Activated B cell treated with CpG ODN at 0.5 μM for 24 hours (primary cell): ENCODE measurements at regions of chr1 and their contacts with region 1.

Region 1: DNA sequence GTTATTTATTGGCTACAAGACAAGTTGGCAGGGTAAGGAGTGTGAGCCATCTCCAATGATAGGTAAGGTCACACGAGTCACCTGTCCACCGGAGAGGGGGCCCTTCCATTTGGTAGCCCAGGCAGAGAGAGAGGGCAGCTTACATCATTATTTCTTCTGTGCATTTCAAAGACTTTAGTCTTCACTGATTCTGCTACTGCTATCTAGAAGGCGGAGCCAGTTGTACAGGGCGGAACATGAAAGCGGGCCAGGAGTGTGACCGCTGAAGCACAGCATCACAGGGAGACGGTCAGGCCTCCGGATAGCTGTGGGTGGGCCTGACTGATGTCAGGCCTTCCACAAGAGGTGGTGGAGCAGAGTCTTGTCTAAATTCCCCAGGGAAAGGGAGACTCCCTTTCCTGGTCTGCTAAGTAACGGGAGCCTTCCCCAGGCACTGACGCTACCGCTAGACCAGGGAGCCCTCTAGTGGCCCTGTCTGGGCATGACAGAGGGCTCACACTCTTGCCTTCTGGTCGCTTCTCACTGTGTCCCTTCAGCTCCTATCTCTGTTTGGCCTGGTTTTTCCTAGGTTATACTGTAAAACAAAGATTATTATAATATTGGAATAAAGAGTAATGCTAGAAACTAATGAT is 36.7 kb downstream of the ZNF695 start:
- DNase-seq: peak; percentile 29
- ATAC-seq: no peak
- H3K4me3 Mint-ChIP-seq: peak overlapping the region; percentile 11
- H3K27ac Mint-ChIP-seq: no peak overlapping the region
- H3K4me1 Mint-ChIP-seq: no peaks in the 10 kb centered on the region
- H3K27me3 Mint-ChIP-seq: no peaks in the 10 kb centered on the region
- CTCF ChIP-seq: no peak

Region 2: DNA sequence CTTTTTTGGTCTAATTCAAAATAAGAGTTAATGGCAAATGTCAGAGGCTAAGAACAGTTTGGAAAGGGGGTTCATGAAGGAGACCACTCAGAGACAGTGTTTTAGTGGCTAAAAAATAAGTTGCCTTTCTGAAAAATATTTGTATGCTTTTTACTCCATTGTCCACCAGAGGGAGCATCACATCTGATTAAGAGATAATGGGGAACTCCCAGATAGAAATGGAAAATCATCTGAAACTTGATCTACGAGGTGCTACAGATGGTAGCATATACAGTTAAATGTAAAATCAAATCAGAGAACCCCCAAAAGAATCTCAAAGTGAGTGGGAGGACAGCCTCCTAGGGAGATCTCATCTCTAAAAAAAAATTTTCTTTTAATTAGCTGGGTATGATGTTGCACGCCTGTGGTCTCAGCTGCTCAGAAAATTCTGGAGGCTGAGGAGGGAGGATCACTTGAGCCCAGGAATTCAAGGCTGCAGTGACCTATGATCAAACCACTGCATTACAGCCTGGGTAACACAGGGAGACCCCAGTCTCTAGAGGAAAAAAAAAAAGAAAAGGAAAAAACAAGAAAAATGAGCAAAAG is 473.8 kb before region 1 on chr1:
- CTCF ChIA-PET with region 1: no interaction called
- POLR2A ChIA-PET with region 1: no interaction called
- intact Hi-C with region 1: loop called (anchors 1 kb)
- DNase-seq: no peak
- ATAC-seq: peak; percentile 86
- H3K4me3 Mint-ChIP-seq: no peak overlapping the region
- H3K27ac Mint-ChIP-seq: no peak overlapping the region
- H3K4me1 Mint-ChIP-seq: peaks cover 4% of the 10 kb centered on the region
- H3K27me3 Mint-ChIP-seq: no peaks in the 10 kb centered on the region
- CTCF ChIP-seq: peak; percentile 55

Region 3: DNA sequence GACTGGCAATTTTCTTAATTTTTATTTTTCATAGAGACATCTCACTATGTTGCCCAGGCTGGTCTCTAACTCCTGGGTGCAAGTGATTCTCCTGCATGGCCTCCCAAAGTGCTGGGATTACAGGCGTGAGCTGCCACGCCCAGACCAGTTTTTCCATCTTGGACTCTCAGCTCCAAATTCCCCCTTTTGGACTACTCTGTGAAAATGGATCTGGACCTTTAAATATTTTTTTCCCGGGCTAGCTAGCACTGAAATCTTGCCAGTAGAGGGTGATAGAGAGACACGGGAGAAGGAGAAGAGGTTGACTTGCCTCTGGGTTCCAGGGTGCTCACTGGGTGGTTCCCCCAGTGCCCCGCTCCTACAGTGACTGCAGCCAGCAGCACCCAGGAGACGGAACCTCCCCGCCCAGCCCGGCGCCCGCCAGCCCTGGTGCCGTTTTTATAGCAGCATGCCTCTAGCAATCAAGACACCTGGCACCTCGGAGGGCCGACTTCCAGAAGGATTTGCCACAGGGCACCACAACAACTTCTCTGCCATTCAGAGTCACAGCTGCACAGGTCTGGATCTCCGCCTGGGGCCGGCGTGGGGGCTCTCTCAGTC is 281.7 kb before region 1 on chr1:
- CTCF ChIA-PET with region 1: no interaction called
- POLR2A ChIA-PET with region 1: no interaction called
- intact Hi-C with region 1: loop called (anchors 1 kb)
- DNase-seq: no peak
- ATAC-seq: peak; percentile 90
- H3K4me3 Mint-ChIP-seq: peak overlapping the region; percentile 38
- H3K27ac Mint-ChIP-seq: no peak overlapping the region
- H3K4me1 Mint-ChIP-seq: peaks cover 4% of the 10 kb centered on the region
- H3K27me3 Mint-ChIP-seq: no peaks in the 10 kb centered on the region
- CTCF ChIP-seq: peak; percentile 19

Region 4: GRCh38 chr1:246875041-246876026 is 95.9 kb before region 1 on chr1:
- CTCF ChIA-PET with region 1: no interaction called
- POLR2A ChIA-PET with region 1: no interaction called
- intact Hi-C with region 1: no loop called
- DNase-seq: no peak
- ATAC-seq: no peak
- H3K4me3 Mint-ChIP-seq: no peak overlapping the region
- H3K27ac Mint-ChIP-seq: no peak overlapping the region
- H3K4me1 Mint-ChIP-seq: no peaks in the 10 kb centered on the region
- H3K27me3 Mint-ChIP-seq: no peaks in the 10 kb centered on the region
- CTCF ChIP-seq: no peak

Region 5: GRCh38 chr1:246907472-246907871 is 63.7 kb before region 1 on chr1:
- CTCF ChIA-PET with region 1: interaction called, 17 read pairs
- POLR2A ChIA-PET with region 1: no interaction called
- intact Hi-C with region 1: loop called (anchors 1 kb)
- DNase-seq: no peak
- ATAC-seq: no peak
- H3K4me3 Mint-ChIP-seq: no peak overlapping the region
- H3K27ac Mint-ChIP-seq: no peak overlapping the region
- H3K4me1 Mint-ChIP-seq: no peaks in the 10 kb centered on the region
- H3K27me3 Mint-ChIP-seq: no peaks in the 10 kb centered on the region
- CTCF ChIP-seq: no peak

Region 6: DNA sequence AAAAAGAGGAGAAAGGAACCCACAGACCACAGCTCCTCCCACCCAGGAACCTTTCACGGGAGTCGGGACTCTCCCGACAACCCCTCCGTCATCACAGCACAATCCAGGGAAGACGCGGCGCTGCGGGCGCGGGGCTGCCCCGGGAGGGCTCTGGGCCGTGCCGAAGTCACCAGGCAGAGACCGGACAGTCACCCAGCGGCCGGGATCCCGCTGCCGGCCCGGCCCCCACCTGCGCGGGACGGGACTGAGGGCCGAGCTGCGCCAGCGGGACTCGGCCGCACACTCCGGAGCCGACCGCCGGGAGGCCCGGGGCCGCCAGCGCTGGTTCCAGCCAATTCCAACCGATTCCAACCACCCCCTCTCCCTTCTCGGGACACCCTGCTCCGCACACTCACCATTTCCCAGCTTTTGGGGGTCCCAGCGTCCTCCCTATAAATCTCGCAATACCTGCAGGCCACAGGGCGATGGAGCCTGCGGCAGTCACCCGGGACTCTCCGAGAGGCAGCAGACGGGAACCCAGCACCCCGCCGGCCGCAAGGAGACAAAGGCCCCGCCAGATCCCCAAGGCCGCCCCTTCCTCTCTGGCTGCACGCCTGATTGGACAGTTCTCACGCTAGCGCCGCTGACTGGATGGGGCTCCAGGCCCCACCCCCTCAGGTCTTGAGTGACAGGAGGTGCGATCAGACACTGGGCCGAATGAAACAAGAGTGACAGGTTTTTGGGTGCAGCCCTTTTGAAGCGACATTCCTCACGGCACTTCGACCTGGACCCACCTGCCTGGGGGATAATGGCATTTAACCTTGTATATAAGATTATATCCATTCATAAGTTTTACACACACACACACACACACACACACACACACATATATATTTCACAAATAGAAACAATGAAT is 36.6 kb after region 1 on chr1 and contains the start of gene ZNF695:
- CTCF ChIA-PET with region 1: no interaction called
- POLR2A ChIA-PET with region 1: no interaction called
- intact Hi-C with region 1: no loop called
- DNase-seq: peak; percentile 56
- ATAC-seq: peak; percentile 100
- H3K4me3 Mint-ChIP-seq: peak within 1 kb of the TSS; percentile 92
- H3K27ac Mint-ChIP-seq: peak within 1 kb of the TSS; percentile 18
- H3K4me1 Mint-ChIP-seq: peaks cover 10% of the 10 kb centered on the region
- H3K27me3 Mint-ChIP-seq: peaks cover 14% of the 10 kb centered on the region
- CTCF ChIP-seq: no peak
- total RNA-seq, gene ZNF695: 0.07 and 0.83 TPM in 2 replicates

Region 7: DNA sequence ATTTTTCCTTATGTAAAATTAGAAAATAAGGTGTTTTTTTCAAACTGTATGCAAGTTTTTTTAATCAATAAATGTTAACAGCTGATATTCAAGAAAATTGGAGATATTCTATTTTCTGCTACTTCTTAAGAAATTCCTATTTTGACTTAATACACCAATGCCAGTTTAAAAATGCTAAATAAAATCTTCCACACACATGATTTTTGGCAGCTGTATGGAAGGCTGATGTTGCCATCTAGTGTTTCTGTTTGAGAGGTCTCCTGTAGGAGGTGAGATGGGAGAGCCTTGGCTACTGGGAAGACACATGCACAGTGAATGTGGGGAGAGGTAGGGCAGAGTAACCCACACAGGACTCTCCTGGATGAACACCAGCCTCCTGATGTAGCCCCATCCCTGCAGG is 515.9 kb after region 1 on chr1:
- CTCF ChIA-PET with region 1: no interaction called
- POLR2A ChIA-PET with region 1: no interaction called
- intact Hi-C with region 1: loop called (anchors 5 kb)
- DNase-seq: peak; percentile 17
- ATAC-seq: peak; percentile 81
- H3K4me3 Mint-ChIP-seq: no peak overlapping the region
- H3K27ac Mint-ChIP-seq: no peak overlapping the region
- H3K4me1 Mint-ChIP-seq: no peaks in the 10 kb centered on the region
- H3K27me3 Mint-ChIP-seq: peaks cover 6% of the 10 kb centered on the region
- CTCF ChIP-seq: peak; percentile 55